ENCODE measurements at regions of chr9 and their contacts with region 1.

Region 1: GRCh38 chr9:89278997-89279739 is 31.8 kb upstream of the CKS2 start:
- DNase-seq: no peak
- H3K4me3 ChIP-seq: no peak overlapping the region
- H3K27ac ChIP-seq: no peak overlapping the region
- H3K4me1 ChIP-seq: no peaks in the 10 kb centered on the region
- H3K27me3 ChIP-seq: no peaks in the 10 kb centered on the region
- CTCF ChIP-seq: peak; percentile 87

Region 2: GRCh38 chr9:88593537-88594185 is 685.5 kb before region 1 on chr9:
- CTCF ChIA-PET with region 1: interaction called, 3 read pairs
- POLR2A ChIA-PET with region 1: no interaction called
- intact Hi-C with region 1: loop called (anchors 2 kb)
- DNase-seq: peak in 1 of 2 experiments; percentile 52
- H3K4me3 ChIP-seq: no peak overlapping the region
- H3K27ac ChIP-seq: no peak overlapping the region
- H3K4me1 ChIP-seq: no peaks in the 10 kb centered on the region
- H3K27me3 ChIP-seq: no peaks in the 10 kb centered on the region
- CTCF ChIP-seq: peak; percentile 86

Region 3: DNA sequence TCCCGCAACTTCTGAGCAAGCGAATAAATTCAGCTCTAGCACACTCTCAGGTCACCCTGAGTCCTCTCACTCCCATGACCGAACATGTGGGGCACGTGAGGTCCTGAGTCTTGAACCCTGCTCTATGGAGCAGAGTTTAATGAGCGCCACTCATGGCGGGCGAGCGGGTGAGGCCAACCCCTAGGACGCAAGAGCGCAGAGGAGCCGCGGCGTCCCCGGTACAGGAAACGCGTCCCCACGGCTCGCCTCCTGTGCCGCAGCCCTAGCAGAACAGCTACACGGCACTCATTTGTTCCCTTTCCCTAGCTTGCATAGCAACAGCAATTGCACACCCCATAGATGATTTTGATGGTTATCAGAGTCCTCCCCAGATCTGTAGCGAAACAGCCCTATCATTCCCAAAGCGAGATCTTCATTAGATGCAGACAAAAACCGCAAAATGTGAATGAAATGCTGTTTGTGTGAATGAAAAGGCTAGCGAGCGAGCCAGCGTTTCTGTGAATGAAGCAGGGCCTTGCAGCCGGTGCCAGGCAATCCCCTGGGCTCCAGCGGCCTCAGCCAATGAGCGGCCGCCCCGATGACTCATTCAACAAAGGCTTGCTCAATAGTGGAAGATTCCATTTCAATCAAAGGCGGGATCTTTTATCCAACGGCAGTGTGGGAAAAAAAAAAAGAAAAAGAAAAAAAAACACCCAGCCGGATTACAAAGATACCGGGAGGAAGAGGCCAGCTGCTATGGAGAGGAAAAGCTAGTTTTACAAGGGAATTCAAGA is 99.1 kb before region 1 on chr9:
- CTCF ChIA-PET with region 1: interaction called, 6 read pairs
- POLR2A ChIA-PET with region 1: no interaction called
- intact Hi-C with region 1: loop called (anchors 2 kb)
- DNase-seq: peak; percentile 93 to 95
- H3K4me3 ChIP-seq: peak overlapping the region; percentile 62
- H3K27ac ChIP-seq: peak overlapping the region; percentile 78
- H3K4me1 ChIP-seq: peaks cover 34% of the 10 kb centered on the region
- H3K27me3 ChIP-seq: no peaks in the 10 kb centered on the region
- CTCF ChIP-seq: no peak

Region 4: GRCh38 chr9:89310475-89311346 is 31.5 kb after region 1 on chr9 and contains the start of gene CKS2:
- CTCF ChIA-PET with region 1: interaction called, 5 read pairs
- POLR2A ChIA-PET with region 1: no interaction called
- intact Hi-C with region 1: loop called (anchors 2 kb)
- DNase-seq: peak; percentile 99 to 100
- H3K4me3 ChIP-seq: peak within 1 kb of the TSS; percentile 91
- H3K27ac ChIP-seq: peak within 1 kb of the TSS; percentile 93
- H3K4me1 ChIP-seq: peaks cover 36% of the 10 kb centered on the region
- H3K27me3 ChIP-seq: no peaks in the 10 kb centered on the region
- CTCF ChIP-seq: no peak
- total RNA-seq, gene CKS2: 138 and 260 TPM in 2 replicates

Region 5: GRCh38 chr9:89488936-89489335 is 209.8 kb after region 1 on chr9:
- CTCF ChIA-PET with region 1: no interaction called
- POLR2A ChIA-PET with region 1: interaction called, 14 read pairs
- intact Hi-C with region 1: no loop called
- DNase-seq: no peak
- H3K4me3 ChIP-seq: no peak overlapping the region
- H3K27ac ChIP-seq: no peak overlapping the region
- H3K4me1 ChIP-seq: no peaks in the 10 kb centered on the region
- H3K27me3 ChIP-seq: no peaks in the 10 kb centered on the region
- CTCF ChIP-seq: no peak

Measured in PC-9 (cell line).